ENCODE measurements at regions of chr1 and their contacts with region 1.

Region 1: GRCh38 chr1:19338323-19338762 is 26.2 kb downstream of the SLC66A1 start:
- DNase-seq: peak; percentile 35
- H3K4me3 ChIP-seq: peak overlapping the region in 1 of 2 donors; percentile 18
- H3K27ac ChIP-seq: no peak overlapping the region
- H3K4me1 ChIP-seq: peaks cover 25% of the 10 kb centered on the region
- H3K27me3 ChIP-seq: no peaks in the 10 kb centered on the region
- CTCF ChIP-seq: no peak
- POLR2A ChIP-seq: no peak

Region 2: DNA sequence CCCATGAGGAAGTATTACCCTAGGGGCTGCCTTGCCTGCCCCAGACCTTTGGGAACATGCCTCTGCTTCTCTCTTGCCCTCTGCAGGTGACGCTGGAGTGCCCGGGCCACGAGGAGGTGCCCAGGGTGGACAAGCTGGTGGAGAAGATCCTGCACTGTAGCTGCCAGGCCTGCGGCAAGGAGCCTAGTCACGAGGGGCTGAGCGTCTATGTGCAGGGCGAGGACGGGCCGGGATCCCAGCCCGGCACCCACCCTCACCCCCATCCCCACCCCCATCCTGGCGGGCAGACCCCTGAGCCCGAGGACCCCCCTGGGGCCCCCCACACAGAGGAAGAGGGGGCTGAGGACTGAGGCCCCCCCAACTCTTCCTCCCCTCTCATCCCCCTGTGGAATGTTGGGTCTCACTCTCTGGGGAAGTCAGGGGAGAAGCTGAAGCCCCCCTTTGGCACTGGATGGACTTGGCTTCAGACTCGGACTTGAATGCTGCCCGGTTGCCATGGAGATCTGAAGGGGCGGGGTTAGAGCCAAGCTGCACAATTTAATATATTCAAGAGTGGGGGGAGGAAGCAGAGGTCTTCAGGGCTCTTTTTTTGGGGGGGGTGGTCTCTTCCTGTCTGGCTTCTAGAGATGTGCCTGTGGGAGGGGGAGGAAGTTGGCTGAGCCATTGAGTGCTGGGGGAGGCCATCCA is 318.6 kb after region 1 on chr1:
- intact Hi-C with region 1: loop called (anchors 5 kb)
- DNase-seq: no peak
- H3K4me3 ChIP-seq: no peak overlapping the region
- H3K27ac ChIP-seq: no peak overlapping the region
- H3K4me1 ChIP-seq: peaks cover 15% of the 10 kb centered on the region
- H3K27me3 ChIP-seq: no peaks in the 10 kb centered on the region
- CTCF ChIP-seq: no peak
- POLR2A ChIP-seq: no peak

Measured in testis (tissue), 5 donors.